ENCODE measurements at regions of chr2 and their contacts with region 1.

Region 1: GRCh38 chr2:105431367-105432043 is 32.7 kb upstream of the FHL2 start:
- DNase-seq: peak; percentile 90
- H3K4me3 ChIP-seq: no peak overlapping the region
- H3K27ac ChIP-seq: peak overlapping the region in 3 of 4 donors; percentile 52 to 64 (median 58)
- H3K4me1 ChIP-seq: peaks cover 0 to 24% (median 21%) of the 10 kb centered on the region in 4 donors
- H3K27me3 ChIP-seq: no peaks in the 10 kb centered on the region
- CTCF ChIP-seq: no peak
- EP300 ChIP-seq: no peak
- POLR2A ChIP-seq: no peak

Region 2: DNA sequence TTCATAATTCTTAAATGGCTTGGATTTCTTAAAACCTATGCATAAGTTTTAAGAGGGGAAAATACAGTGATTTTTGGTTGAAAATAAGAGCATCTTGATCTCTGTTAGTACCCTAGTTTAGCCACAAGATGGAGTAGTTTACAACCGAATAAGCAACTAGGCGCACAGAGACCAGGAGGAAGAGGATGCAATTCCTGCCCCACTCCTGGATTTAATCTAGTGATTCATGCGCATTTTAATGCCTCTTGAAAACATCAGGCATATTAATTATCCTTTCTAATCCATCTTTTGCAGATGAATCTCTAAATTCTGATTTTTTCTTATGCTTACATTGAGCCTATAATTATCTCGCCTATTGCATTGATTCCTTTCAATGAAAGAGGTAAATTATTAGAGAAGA is 317.0 kb before region 1 on chr2:
- intact Hi-C with region 1: no loop called
- DNase-seq: no peak
- H3K4me3 ChIP-seq: no peak overlapping the region
- H3K27ac ChIP-seq: no peak overlapping the region
- H3K4me1 ChIP-seq: no peaks in the 10 kb centered on the region
- H3K27me3 ChIP-seq: peaks cover 0 to 4% (median 0%) of the 10 kb centered on the region in 3 donors
- CTCF ChIP-seq: peak in 3 of 4 experiments; percentile 31 to 73 (median 71)
- EP300 ChIP-seq: no peak
- POLR2A ChIP-seq: no peak

Region 3: DNA sequence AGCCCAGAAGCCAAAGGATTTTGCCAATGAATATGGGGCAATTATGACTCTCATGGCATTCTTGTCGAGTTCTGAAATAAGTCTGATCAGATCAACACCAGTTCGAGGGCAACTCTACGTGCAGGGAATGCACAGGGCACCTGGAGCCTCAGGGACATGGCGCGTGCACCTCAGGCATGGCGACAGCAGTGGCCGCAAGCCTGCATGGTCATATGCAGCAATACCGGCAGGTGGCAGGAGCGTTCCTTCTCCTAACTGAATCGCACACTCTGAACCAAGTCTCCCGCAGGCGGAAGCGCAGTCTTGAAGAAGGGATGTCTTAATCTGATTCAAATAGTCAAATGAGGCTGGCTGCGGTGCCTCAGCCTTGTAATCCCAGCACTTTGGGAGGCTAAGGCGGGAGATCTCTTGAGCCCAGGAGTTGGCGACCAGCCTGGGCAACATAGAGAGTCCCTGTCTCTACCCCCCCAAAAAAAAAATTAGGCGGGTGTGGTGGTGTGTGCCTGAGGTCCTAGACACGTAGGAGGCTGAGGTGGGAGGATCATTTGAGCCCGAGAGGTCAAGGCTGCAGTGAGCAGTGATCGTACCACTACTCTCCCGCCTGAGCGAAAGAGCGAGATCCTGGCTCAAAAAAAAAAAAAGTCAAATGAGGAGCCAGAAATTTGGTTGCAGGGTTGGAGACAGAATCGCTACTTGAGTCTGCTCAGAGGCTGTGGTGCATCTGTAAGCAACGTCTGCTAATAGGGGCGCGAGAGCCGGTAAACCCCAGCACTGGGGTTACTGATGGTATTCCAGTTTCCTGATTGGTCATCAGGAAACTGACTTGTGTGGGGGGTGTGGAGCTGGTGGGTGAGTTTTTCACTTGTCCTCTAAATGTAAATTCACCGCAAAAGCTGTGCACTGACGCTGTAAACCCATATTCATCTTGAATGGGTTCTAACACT is 61.5 kb before region 1 on chr2:
- intact Hi-C with region 1: no loop called
- DNase-seq: peak; percentile 93
- H3K4me3 ChIP-seq: no peak overlapping the region
- H3K27ac ChIP-seq: no peak overlapping the region
- H3K4me1 ChIP-seq: peaks cover 0 to 39% (median 28%) of the 10 kb centered on the region in 4 donors
- H3K27me3 ChIP-seq: no peaks in the 10 kb centered on the region
- CTCF ChIP-seq: peak; percentile 87 to 96 (median 90)
- EP300 ChIP-seq: no peak
- POLR2A ChIP-seq: no peak

Region 4: GRCh38 chr2:105398699-105399432 is 32.6 kb before region 1 on chr2 and contains the start of gene FHL2:
- intact Hi-C with region 1: loop called (anchors 1 kb)
- DNase-seq: peak; percentile 88
- H3K4me3 ChIP-seq: peak within 1 kb of the TSS; percentile 76 to 97 (median 82)
- H3K27ac ChIP-seq: peak within 1 kb of the TSS; percentile 89 to 92 (median 90)
- H3K4me1 ChIP-seq: peaks cover 0 to 40% (median 31%) of the 10 kb centered on the region in 4 donors
- H3K27me3 ChIP-seq: no peaks in the 10 kb centered on the region
- CTCF ChIP-seq: peak; percentile 22 to 54 (median 41)
- EP300 ChIP-seq: no peak
- POLR2A ChIP-seq: peak; percentile 67 to 69
- total RNA-seq, gene FHL2: 62.0 to 123 (median 77.6) TPM

Region 5: GRCh38 chr2:105595536-105595935 is 164.0 kb after region 1 on chr2:
- intact Hi-C with region 1: no loop called
- DNase-seq: no peak
- H3K4me3 ChIP-seq: no peak overlapping the region
- H3K27ac ChIP-seq: no peak overlapping the region
- H3K4me1 ChIP-seq: no peaks in the 10 kb centered on the region
- H3K27me3 ChIP-seq: no peaks in the 10 kb centered on the region
- CTCF ChIP-seq: no peak
- EP300 ChIP-seq: no peak
- POLR2A ChIP-seq: no peak